ENCODE measurements at regions of chr19 and their contacts with region 1.

Region 1: GRCh38 chr19:45523642-45524256 is 16.5 kb downstream of the VASP start:
- DNase-seq: peak; percentile 91
- ATAC-seq: peak; percentile 99
- H3K4me3 ChIP-seq: no peak overlapping the region
- H3K4me3 Mint-ChIP-seq: no peak overlapping the region
- H3K27ac ChIP-seq: peak overlapping the region in 1 of 2 donors; percentile 39
- H3K27ac Mint-ChIP-seq: peak overlapping the region; percentile 85
- H3K4me1 ChIP-seq: peaks cover 8 to 16% of the 10 kb centered on the region in 2 donors
- H3K4me1 Mint-ChIP-seq: peaks cover 23% of the 10 kb centered on the region
- H3K27me3 ChIP-seq: no peaks in the 10 kb centered on the region
- H3K27me3 Mint-ChIP-seq: no peaks in the 10 kb centered on the region
- CTCF ChIP-seq: peak; percentile 89

Region 2: GRCh38 chr19:45405435-45406225 is 118.1 kb before region 1 on chr19:
- CTCF ChIA-PET with region 1: no interaction called
- POLR2A ChIA-PET with region 1: no interaction called
- intact Hi-C with region 1: no loop called
- DNase-seq: peak; percentile 89
- ATAC-seq: peak; percentile 66
- H3K4me3 ChIP-seq: peak overlapping the region; percentile 72 to 97 (median 80)
- H3K4me3 Mint-ChIP-seq: peak overlapping the region; percentile 93
- H3K27ac ChIP-seq: peak overlapping the region; percentile 81 to 92
- H3K27ac Mint-ChIP-seq: peak overlapping the region; percentile 92
- H3K4me1 ChIP-seq: peaks cover 34 to 43% of the 10 kb centered on the region in 2 donors
- H3K4me1 Mint-ChIP-seq: peaks cover 46% of the 10 kb centered on the region
- H3K27me3 ChIP-seq: peaks cover 0 to 30% (median 17%) of the 10 kb centered on the region in 4 experiments
- H3K27me3 Mint-ChIP-seq: peaks cover 13% of the 10 kb centered on the region
- CTCF ChIP-seq: no peak

Region 3: DNA sequence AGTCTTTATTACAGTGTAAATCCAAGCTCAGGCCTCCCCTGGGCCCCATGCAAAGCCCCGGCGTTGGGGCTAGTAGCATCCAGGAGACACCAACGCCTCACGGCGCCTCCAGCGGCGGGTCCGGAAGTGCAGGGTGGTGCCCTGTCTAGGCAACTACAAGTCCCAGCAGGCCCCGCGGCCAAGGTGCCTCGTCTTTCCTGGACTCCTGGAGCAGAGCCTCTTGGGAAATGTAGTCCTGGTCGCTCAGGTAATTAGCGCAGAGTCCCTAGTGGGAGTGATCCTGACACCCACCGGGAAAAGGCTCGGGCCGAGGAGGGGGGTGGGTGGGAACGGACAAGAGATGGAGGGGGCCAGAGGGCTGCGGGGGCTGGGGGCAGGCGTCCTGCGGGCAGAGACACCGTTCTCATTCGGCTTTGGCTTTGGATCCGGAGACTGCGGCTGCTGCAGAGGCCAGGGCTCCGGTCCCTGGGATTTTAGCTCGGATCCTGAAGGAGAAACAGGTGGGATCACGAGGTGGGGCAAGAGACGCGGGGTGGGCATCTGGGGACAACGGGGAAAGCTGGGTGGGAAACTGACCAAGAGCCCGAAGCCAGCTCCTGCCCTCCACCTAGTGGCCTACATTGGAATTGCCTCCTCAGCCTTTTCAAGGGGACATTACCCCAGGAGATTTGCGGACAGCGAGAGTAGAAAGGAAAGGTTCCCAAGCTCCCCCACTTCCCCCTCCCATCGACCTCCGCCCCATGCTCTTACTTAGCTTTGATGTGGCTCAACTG is 38.3 kb before region 1 on chr19:
- CTCF ChIA-PET with region 1: interaction called, 5 read pairs
- POLR2A ChIA-PET with region 1: no interaction called
- intact Hi-C with region 1: loop called (anchors 1 kb)
- DNase-seq: peak; percentile 96
- ATAC-seq: peak; percentile 99
- H3K4me3 ChIP-seq: peak overlapping the region; percentile 38 to 80 (median 63)
- H3K4me3 Mint-ChIP-seq: peak overlapping the region; percentile 95
- H3K27ac ChIP-seq: no peak overlapping the region
- H3K27ac Mint-ChIP-seq: peak overlapping the region; percentile 76
- H3K4me1 ChIP-seq: peaks cover 3 to 9% of the 10 kb centered on the region in 2 donors
- H3K4me1 Mint-ChIP-seq: peaks cover 11% of the 10 kb centered on the region
- H3K27me3 ChIP-seq: no peaks in the 10 kb centered on the region
- H3K27me3 Mint-ChIP-seq: no peaks in the 10 kb centered on the region
- CTCF ChIP-seq: peak; percentile 92

Region 4: DNA sequence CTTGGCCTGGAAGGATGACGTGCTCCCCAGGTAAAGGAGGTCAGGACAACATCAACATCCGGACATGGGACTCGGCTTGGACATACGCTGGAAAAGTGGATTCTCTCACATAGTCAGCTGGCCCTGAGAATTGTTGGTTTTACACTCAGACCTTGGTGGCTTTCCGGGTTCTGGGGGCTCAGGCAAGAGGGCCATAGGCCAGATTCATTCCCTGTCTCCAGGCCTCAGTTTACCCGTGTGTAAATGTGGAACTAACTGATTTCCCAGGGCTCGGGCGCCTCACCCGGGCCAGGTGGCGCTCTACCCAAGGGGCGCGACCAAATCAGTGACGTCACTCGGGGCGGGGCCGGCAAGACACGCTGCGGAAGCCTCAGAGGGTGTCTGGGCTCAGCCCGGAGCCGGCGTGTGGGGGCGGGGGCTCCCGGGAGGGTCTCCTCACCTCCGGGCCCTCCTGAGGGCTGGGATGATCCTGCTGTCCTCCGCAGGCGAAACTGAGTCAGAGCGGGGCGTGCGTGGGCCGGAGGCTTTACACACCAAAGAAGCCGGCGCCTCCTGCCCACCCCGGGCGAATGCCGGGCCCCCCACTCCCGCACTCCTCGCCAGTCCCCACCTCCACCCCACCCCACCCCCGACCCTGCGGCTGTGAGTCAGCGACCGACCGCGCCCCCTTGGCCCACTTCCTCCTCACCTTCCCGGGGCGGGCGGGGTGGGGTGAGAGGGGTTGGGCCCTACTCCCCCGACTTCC is 17.3 kb before region 1 on chr19:
- CTCF ChIA-PET with region 1: interaction called, 3 read pairs
- POLR2A ChIA-PET with region 1: no interaction called
- intact Hi-C with region 1: loop called (anchors 1 kb)
- DNase-seq: peak; percentile 98
- ATAC-seq: peak; percentile 74
- H3K4me3 ChIP-seq: peak overlapping the region; percentile 63 to 96 (median 84)
- H3K4me3 Mint-ChIP-seq: peak overlapping the region; percentile 94
- H3K27ac ChIP-seq: peak overlapping the region; percentile 83 to 87
- H3K27ac Mint-ChIP-seq: peak overlapping the region; percentile 94
- H3K4me1 ChIP-seq: peaks cover 26 to 43% of the 10 kb centered on the region in 2 donors
- H3K4me1 Mint-ChIP-seq: peaks cover 54% of the 10 kb centered on the region
- H3K27me3 ChIP-seq: no peaks in the 10 kb centered on the region
- H3K27me3 Mint-ChIP-seq: no peaks in the 10 kb centered on the region
- CTCF ChIP-seq: peak; percentile 63

Region 5: GRCh38 chr19:45584332-45585157 is 60.8 kb after region 1 on chr19 and contains the start of gene OPA3:
- CTCF ChIA-PET with region 1: no interaction called
- POLR2A ChIA-PET with region 1: no interaction called
- intact Hi-C with region 1: loop called (anchors 1 kb)
- DNase-seq: peak; percentile 100
- ATAC-seq: peak; percentile 87
- H3K4me3 ChIP-seq: peak within 1 kb of the TSS; percentile 62 to 98 (median 82)
- H3K4me3 Mint-ChIP-seq: peak within 1 kb of the TSS; percentile 85
- H3K27ac ChIP-seq: peak within 1 kb of the TSS; percentile 97 to 98
- H3K27ac Mint-ChIP-seq: peak within 1 kb of the TSS; percentile 99
- H3K4me1 ChIP-seq: peaks cover 10 to 15% of the 10 kb centered on the region in 2 donors
- H3K4me1 Mint-ChIP-seq: peaks cover 21% of the 10 kb centered on the region
- H3K27me3 ChIP-seq: no peaks in the 10 kb centered on the region
- H3K27me3 Mint-ChIP-seq: peaks cover 5% of the 10 kb centered on the region
- CTCF ChIP-seq: no peak
- total RNA-seq, gene OPA3: 11.2 and 11.4 TPM in 2 replicates

Region 6: DNA sequence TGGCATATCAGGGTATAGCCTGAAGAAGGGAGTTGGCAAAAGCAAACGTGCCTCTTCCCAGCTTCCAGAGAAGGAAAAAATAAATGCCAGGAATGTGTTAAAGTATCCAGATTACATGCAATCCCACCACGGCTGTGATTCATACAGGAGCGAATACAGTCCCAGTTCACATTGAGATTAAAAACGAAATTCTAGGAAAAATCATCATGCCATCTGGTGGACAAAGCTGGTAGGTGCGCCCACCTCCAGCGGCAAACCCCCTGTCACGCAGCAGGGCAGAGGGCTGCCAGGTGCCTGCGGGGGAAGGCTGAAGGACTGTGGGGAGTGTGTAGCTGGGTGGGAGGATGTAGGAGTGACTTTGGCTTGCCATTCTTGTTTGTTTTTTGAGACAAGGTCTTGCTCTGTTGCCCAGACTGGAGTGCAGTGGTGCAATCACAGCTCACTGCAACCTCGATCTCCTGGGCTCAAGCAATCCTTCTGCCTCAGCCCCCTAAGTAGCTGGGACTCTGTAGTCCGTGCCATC is 275.3 kb after region 1 on chr19:
- CTCF ChIA-PET with region 1: no interaction called
- POLR2A ChIA-PET with region 1: no interaction called
- intact Hi-C with region 1: loop called (anchors 1 kb)
- DNase-seq: peak; percentile 83
- ATAC-seq: peak; percentile 90
- H3K4me3 ChIP-seq: no peak overlapping the region
- H3K4me3 Mint-ChIP-seq: no peak overlapping the region
- H3K27ac ChIP-seq: no peak overlapping the region
- H3K27ac Mint-ChIP-seq: no peak overlapping the region
- H3K4me1 ChIP-seq: peaks cover 3 to 6% of the 10 kb centered on the region in 2 donors
- H3K4me1 Mint-ChIP-seq: peaks cover 9% of the 10 kb centered on the region
- H3K27me3 ChIP-seq: peaks cover 0 to 12% (median 0%) of the 10 kb centered on the region in 4 experiments
- H3K27me3 Mint-ChIP-seq: peaks cover 14% of the 10 kb centered on the region
- CTCF ChIP-seq: peak; percentile 95

Measured in B cell (primary cell).